ENCODE measurements at regions of chr5 and their contacts with region 1.

Region 1: DNA sequence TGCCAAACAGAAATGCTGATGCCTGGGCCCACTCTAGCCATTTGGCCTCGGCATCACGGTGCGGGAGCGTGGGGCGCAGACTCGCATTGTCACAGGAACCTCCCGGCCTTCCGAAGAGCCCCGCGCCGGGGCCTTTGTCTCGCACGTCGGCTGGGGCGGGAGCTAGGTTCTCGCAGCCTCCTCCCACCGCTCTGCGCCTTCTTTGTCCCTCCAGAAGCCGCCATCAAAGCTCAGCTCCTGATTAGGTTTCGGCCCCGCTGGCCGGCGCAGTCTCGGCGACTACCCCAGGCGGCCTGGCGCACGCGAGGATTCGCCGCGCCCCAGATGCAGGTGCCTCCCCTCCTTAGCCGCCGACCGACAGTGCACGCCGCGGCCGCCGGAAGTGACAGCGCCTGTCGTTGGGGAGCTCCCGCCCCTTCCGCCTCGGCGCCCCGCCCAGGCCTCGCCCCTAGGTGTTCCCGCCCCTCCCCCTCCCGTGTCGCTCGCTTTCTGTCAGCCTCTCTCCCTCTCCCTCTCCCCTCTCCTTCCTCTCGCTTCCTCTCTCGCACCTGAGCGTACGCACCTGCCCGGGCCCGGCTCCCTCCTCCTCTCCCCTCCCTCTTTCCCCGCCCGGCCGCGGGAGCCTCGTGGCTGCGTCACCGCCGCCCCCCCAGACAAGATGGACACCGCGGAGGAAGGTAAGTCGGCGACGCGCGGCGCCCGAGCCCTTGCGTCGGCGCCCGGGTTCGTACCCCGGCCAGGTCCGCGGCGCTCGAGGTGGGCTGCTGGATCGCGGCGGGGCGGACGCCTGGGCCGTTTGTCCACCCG is at the start of gene MARCHF6:
- DNase-seq: peak; percentile 90 to 98 (median 94)
- ATAC-seq: peak; percentile 92
- H3K4me3 ChIP-seq: peak within 1 kb of the TSS; percentile 84
- H3K4me3 Mint-ChIP-seq: peak within 1 kb of the TSS; percentile 81 to 99 (median 98)
- H3K27ac ChIP-seq: peak within 1 kb of the TSS; percentile 84
- H3K27ac Mint-ChIP-seq: peak within 1 kb of the TSS; percentile 96 to 100 (median 98)
- H3K4me1 ChIP-seq: peaks cover 16 to 31% of the 10 kb centered on the region in 2 donors
- H3K4me1 Mint-ChIP-seq: peaks cover 29 to 53% (median 43%) of the 10 kb centered on the region in 7 donors
- H3K27me3 ChIP-seq: no peaks in the 10 kb centered on the region
- H3K27me3 Mint-ChIP-seq: no peaks in the 10 kb centered on the region
- total RNA-seq, gene MARCHF6: 85.4 to 211 (median 180) TPM

Region 2: DNA sequence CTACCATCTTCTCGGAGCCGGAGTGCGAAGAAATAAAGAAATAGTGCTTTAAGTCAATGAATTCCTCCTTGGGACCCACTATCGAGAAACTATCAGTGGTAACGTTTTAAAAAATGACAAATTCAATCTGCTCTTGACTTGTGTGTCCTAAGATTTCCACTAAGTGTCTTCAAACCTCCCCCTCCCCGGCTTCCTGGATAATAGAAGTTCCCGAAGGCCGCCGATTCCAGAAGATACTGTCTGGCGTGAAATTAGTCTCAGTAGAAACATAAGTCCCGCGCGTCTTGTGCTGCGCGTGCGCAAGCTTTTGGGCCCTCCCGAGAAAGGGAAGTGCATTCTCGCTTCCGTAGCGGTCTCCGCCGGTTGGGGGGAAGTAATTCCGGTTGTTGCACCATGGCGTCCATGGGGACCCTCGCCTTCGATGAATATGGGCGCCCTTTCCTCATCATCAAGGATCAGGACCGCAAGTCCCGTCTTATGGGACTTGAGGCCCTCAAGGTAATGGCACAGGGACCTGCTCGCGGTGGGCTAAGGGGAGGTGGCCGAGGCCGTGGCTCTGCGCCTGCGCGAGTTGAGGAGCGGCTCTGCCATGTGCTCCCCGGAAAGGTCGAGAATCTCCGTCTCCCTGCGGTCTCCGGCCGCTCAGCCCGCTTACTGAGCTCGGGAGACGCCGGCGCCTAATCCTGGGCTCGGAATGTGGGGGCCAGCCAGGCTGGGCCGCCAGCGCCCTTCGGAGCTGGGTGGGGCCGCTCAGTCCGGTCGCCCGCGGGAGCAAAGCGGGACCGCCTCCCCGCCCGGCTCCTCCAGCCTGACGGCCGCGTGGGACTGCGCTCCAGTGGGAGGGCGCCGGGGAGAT is 103.3 kb before region 1 on chr5 and contains the start of gene CCT5:
- CTCF ChIA-PET with region 1: no interaction called
- POLR2A ChIA-PET with region 1: interaction called, 25 read pairs
- intact Hi-C with region 1: loop called (anchors 1 kb)
- DNase-seq: peak; percentile 83 to 97 (median 95)
- ATAC-seq: peak; percentile 91
- H3K4me3 ChIP-seq: peak within 1 kb of the TSS; percentile 97
- H3K4me3 Mint-ChIP-seq: peak within 1 kb of the TSS; percentile 83 to 99 (median 95)
- H3K27ac ChIP-seq: peak within 1 kb of the TSS; percentile 89
- H3K27ac Mint-ChIP-seq: peak within 1 kb of the TSS; percentile 96 to 100 (median 99)
- H3K4me1 ChIP-seq: peaks cover 12 to 32% of the 10 kb centered on the region in 2 donors
- H3K4me1 Mint-ChIP-seq: peaks cover 47 to 66% (median 53%) of the 10 kb centered on the region in 7 donors
- H3K27me3 ChIP-seq: no peaks in the 10 kb centered on the region
- H3K27me3 Mint-ChIP-seq: peaks cover 0 to 5% (median 0%) of the 10 kb centered on the region in 5 donors
- total RNA-seq, gene CCT5: 58.0 to 265 (median 81.9) TPM

Region 3: GRCh38 chr5:10295619-10296326 is 57.7 kb before region 1 on chr5:
- CTCF ChIA-PET with region 1: no interaction called
- POLR2A ChIA-PET with region 1: no interaction called
- intact Hi-C with region 1: no loop called
- DNase-seq: no peak
- ATAC-seq: no peak
- H3K4me3 ChIP-seq: no peak overlapping the region
- H3K4me3 Mint-ChIP-seq: no peak overlapping the region
- H3K27ac ChIP-seq: no peak overlapping the region
- H3K27ac Mint-ChIP-seq: no peak overlapping the region
- H3K4me1 ChIP-seq: no peaks in the 10 kb centered on the region
- H3K4me1 Mint-ChIP-seq: no peaks in the 10 kb centered on the region
- H3K27me3 ChIP-seq: no peaks in the 10 kb centered on the region
- H3K27me3 Mint-ChIP-seq: peaks cover 5 to 18% (median 10%) of the 10 kb centered on the region in 5 donors

Region 4: DNA sequence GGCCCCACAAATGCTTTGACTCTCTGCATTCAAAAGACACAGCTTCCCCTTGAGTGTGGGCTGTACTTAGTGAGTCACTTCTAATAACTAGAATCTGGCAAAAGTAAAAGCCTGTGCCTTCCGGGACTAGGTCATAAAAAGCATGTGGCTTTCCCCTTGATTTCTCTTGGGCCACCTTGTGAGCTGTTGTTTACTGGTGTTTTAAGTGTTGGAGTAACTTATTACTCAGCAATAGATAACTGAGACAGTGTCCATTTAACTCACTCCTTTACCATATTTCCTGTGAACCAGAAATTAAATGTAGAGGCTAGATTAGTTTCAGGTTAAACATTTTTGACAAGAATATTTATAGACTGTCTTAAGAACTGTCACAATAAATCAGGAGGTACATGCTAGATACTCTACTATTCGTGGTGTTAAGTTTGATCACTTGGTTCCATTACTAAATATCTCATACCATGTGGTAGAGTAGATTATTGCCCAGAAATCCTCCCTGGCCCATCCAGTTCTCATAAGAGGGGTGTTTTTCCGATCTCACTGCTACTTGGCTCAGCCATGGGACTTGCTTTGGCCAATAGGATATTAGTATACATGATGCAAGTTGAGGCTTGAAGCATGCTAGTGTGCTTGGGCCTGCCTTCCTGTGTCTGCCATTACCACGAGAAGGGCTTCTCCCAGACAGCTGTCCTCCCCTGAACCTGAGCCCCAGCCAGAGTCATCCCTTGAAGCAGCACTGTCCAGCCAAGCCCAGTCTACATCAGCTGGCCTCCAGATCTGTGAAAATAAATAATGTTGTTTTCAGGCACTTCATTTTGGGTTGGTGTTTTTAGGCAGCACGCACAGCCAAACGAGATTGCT is 35.4 kb before region 1 on chr5:
- CTCF ChIA-PET with region 1: no interaction called
- POLR2A ChIA-PET with region 1: no interaction called
- intact Hi-C with region 1: no loop called
- DNase-seq: no peak
- ATAC-seq: no peak
- H3K4me3 ChIP-seq: no peak overlapping the region
- H3K4me3 Mint-ChIP-seq: no peak overlapping the region
- H3K27ac ChIP-seq: no peak overlapping the region
- H3K27ac Mint-ChIP-seq: peak overlapping the region in 1 of 9 donors; percentile 4
- H3K4me1 ChIP-seq: no peaks in the 10 kb centered on the region
- H3K4me1 Mint-ChIP-seq: peaks cover 0 to 2% (median 0%) of the 10 kb centered on the region in 7 donors
- H3K27me3 ChIP-seq: no peaks in the 10 kb centered on the region
- H3K27me3 Mint-ChIP-seq: peaks cover 0 to 7% (median 0%) of the 10 kb centered on the region in 5 donors

Region 5: DNA sequence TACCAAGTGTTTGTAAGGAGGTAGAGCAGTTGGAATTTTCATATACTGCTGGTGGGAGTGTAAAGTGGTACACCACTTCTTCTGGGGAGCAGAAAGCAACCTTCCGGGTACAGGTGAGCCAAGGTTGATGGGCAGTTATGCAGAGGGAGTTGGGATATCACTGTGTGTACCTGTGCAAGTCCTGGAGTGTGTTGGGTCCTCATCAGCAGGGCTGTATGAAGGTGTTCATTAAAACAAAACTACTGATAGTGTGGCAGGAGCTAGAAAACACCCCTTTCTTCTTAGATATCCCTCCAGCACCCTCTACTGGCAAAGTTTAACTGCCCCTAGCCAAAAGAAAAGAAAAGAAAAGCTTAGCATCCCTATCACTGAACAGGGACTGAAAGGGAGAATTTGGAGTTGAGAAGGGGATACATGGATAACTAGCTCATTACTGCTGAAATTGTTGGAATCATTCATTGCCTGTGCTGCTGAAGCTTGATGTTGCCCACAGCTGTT is 10.8 kb after region 1 on chr5:
- CTCF ChIA-PET with region 1: no interaction called
- POLR2A ChIA-PET with region 1: interaction called, 13 read pairs
- intact Hi-C with region 1: loop called in 1 of 2 experiments (anchors 1 kb)
- DNase-seq: peak in 2 of 9 donors; percentile 15 to 31
- ATAC-seq: peak; percentile 69
- H3K4me3 ChIP-seq: no peak overlapping the region
- H3K4me3 Mint-ChIP-seq: peak overlapping the region in 4 of 10 donors; percentile 3 to 15 (median 10)
- H3K27ac ChIP-seq: no peak overlapping the region
- H3K27ac Mint-ChIP-seq: peak overlapping the region in 2 of 9 donors; percentile 47 to 56
- H3K4me1 ChIP-seq: peaks cover 11 to 15% of the 10 kb centered on the region in 2 donors
- H3K4me1 Mint-ChIP-seq: peaks cover 40 to 94% (median 77%) of the 10 kb centered on the region in 7 donors
- H3K27me3 ChIP-seq: no peaks in the 10 kb centered on the region
- H3K27me3 Mint-ChIP-seq: no peaks in the 10 kb centered on the region

Region 6: GRCh38 chr5:10401498-10401897 is 48.1 kb after region 1 on chr5:
- CTCF ChIA-PET with region 1: interaction called, 3 read pairs
- POLR2A ChIA-PET with region 1: no interaction called
- intact Hi-C with region 1: loop called (anchors 2 to 5 kb)
- DNase-seq: no peak
- ATAC-seq: no peak
- H3K4me3 ChIP-seq: no peak overlapping the region
- H3K4me3 Mint-ChIP-seq: no peak overlapping the region
- H3K27ac ChIP-seq: no peak overlapping the region
- H3K27ac Mint-ChIP-seq: peak overlapping the region in 2 of 9 donors; percentile 32 to 57
- H3K4me1 ChIP-seq: no peaks in the 10 kb centered on the region
- H3K4me1 Mint-ChIP-seq: peaks cover 0 to 8% (median 2%) of the 10 kb centered on the region in 7 donors
- H3K27me3 ChIP-seq: no peaks in the 10 kb centered on the region
- H3K27me3 Mint-ChIP-seq: no peaks in the 10 kb centered on the region

Region 7: DNA sequence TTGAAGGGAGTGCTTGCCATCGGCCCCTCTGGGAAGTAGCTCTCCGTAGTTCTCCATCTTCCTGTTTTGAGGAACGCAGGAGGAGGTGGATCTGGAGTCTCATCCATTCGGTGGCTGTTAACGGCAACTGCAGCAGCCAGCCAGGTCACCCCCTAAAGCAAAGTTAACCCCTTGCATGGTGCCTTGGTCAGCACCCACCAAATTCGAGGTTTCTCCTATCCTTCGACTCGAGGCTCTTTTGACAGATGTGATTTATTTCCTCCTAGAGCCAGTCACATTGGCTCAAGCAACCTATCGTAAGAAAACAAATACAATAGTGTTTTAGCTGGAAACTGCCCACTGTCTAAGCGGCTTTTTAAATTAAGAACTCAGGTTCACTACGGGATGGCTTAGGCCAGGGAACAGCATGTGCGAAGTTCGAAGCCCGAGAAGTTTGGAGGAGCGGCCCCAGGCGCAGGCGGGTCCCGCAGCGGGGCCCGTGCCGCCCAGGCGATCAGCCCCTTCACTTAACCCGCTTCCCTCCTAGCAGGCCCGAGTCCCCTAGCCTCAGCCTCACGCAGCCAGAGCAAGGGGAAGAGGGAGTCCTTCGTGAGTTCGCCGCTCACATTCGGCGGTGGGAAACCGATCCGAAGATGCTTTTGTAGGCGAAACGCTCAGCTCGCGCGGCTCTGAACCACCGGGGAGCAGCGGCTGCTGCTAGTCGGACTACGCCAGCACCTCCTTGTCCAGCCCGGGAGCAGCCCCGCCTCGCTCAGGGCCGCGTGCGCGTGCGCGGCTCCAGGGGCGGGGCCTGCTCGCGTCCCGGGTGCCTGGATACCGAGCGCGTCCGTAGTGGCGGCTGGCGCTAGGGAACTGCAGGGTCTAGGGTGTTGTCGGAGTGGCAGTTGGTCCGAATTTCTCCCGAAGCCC is 87.9 kb after region 1 on chr5 and contains the start of gene ROPN1L:
- CTCF ChIA-PET with region 1: no interaction called
- POLR2A ChIA-PET with region 1: interaction called, 4 read pairs
- intact Hi-C with region 1: loop called (anchors 1 kb)
- DNase-seq: peak; percentile 64 to 89 (median 75)
- ATAC-seq: peak; percentile 97
- H3K4me3 ChIP-seq: peak within 1 kb of the TSS; percentile 97
- H3K4me3 Mint-ChIP-seq: peak within 1 kb of the TSS; percentile 83 to 94 (median 87)
- H3K27ac ChIP-seq: peak within 1 kb of the TSS; percentile 68
- H3K27ac Mint-ChIP-seq: peak within 1 kb of the TSS in 8 of 9 donors; percentile 31 to 82 (median 68)
- H3K4me1 ChIP-seq: peaks cover 35 to 44% of the 10 kb centered on the region in 2 donors
- H3K4me1 Mint-ChIP-seq: peaks cover 36 to 58% (median 49%) of the 10 kb centered on the region in 7 donors
- H3K27me3 ChIP-seq: no peaks in the 10 kb centered on the region
- H3K27me3 Mint-ChIP-seq: peaks cover 0 to 7% (median 0%) of the 10 kb centered on the region in 5 donors
- total RNA-seq, gene ROPN1L: 0.32 to 2.6 (median 0.61) TPM

Region 8: GRCh38 chr5:10627160-10627701 is 273.8 kb after region 1 on chr5:
- CTCF ChIA-PET with region 1: no interaction called
- POLR2A ChIA-PET with region 1: no interaction called
- intact Hi-C with region 1: loop called in 1 of 2 experiments (anchors 2 kb)
- DNase-seq: peak in 1 of 9 donors; percentile 8
- ATAC-seq: peak; percentile 1
- H3K4me3 ChIP-seq: peak overlapping the region; percentile 59
- H3K4me3 Mint-ChIP-seq: peak overlapping the region; percentile 78 to 95 (median 86)
- H3K27ac ChIP-seq: no peak overlapping the region
- H3K27ac Mint-ChIP-seq: peak overlapping the region; percentile 8 to 72 (median 49)
- H3K4me1 ChIP-seq: peaks cover 0 to 8% of the 10 kb centered on the region in 2 donors
- H3K4me1 Mint-ChIP-seq: peaks cover 13 to 43% (median 17%) of the 10 kb centered on the region in 7 donors
- H3K27me3 ChIP-seq: no peaks in the 10 kb centered on the region
- H3K27me3 Mint-ChIP-seq: peaks cover 0 to 7% (median 0%) of the 10 kb centered on the region in 5 donors

Region 9: GRCh38 chr5:10761166-10761932 is 407.9 kb after region 1 on chr5 and contains the start of gene DAP:
- CTCF ChIA-PET with region 1: no interaction called
- POLR2A ChIA-PET with region 1: interaction called, 4 read pairs
- intact Hi-C with region 1: loop called in 1 of 2 experiments (anchors 1 kb)
- DNase-seq: peak; percentile 86 to 97 (median 92)
- ATAC-seq: peak; percentile 93
- H3K4me3 ChIP-seq: peak within 1 kb of the TSS; percentile 73
- H3K4me3 Mint-ChIP-seq: peak within 1 kb of the TSS; percentile 89 to 96 (median 92)
- H3K27ac ChIP-seq: peak within 1 kb of the TSS; percentile 83
- H3K27ac Mint-ChIP-seq: peak within 1 kb of the TSS; percentile 82 to 97 (median 89)
- H3K4me1 ChIP-seq: peaks cover 15 to 16% of the 10 kb centered on the region in 2 donors
- H3K4me1 Mint-ChIP-seq: peaks cover 14 to 60% (median 54%) of the 10 kb centered on the region in 7 donors
- H3K27me3 ChIP-seq: no peaks in the 10 kb centered on the region
- H3K27me3 Mint-ChIP-seq: peaks cover 0 to 14% (median 0%) of the 10 kb centered on the region in 5 donors
- total RNA-seq, gene DAP: 31.9 to 58.6 (median 38.5) TPM